Esophagus squamous epithelium (tissue), 5 donors: ENCODE measurements at regions of chr2 and their contacts with region 1.

Region 1: DNA sequence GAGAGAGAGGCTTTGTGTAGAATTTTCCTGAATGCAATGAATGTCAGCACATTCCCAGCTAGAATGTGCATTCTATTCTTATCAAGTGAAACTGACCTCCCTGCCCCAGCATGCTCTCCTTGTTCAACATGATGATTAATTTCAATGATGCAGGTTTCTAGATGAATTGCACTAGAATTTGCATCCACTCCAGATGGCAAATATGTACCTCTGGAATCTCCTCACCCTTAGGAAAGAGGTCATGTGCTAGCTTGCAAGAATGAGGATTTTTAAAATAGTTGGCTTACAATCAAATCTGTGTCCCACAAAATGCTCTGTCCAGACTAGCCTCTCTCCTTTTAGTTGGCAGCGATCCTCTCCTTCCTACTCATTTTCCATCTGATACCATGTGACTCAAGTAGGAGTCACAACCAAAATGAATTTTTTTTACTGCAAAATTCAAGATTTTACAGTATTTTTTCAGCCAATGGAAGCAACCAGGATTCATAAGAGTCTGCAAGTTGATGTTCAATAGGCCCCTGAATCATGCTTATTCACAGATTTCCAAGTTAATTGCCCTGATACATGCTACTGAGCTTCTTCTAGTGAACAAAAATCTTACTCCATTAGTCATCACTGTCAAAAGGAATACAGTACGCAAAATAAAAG is 21.0 kb upstream of the STAT4 start:
- DNase-seq: no peak
- H3K4me3 ChIP-seq: no peak overlapping the region
- H3K27ac ChIP-seq: peak overlapping the region in 3 of 4 donors; percentile 27 to 49 (median 49)
- H3K4me1 ChIP-seq: peaks cover 0 to 61% (median 26%) of the 10 kb centered on the region in 3 donors
- H3K27me3 ChIP-seq: no peaks in the 10 kb centered on the region
- CTCF ChIP-seq: no peak
- POLR2A ChIP-seq: no peak

Region 2: GRCh38 chr2:191222507-191222906 is 50.7 kb after region 1 on chr2:
- intact Hi-C with region 1: loop called (anchors 10 kb)
- DNase-seq: no peak
- H3K4me3 ChIP-seq: no peak overlapping the region
- H3K27ac ChIP-seq: peak overlapping the region in 2 of 4 donors; percentile 4 to 26
- H3K4me1 ChIP-seq: peaks cover 4 to 18% (median 4%) of the 10 kb centered on the region in 3 donors
- H3K27me3 ChIP-seq: no peaks in the 10 kb centered on the region
- CTCF ChIP-seq: no peak
- POLR2A ChIP-seq: no peak